SK-N-SH (cell line): ENCODE measurements at regions of chr1 and their contacts with region 1.

Region 1: GRCh38 chr1:149962123-149962548 is 25.5 kb upstream of the MTMR11 start:
- DNase-seq: peak; percentile 62
- H3K4me3 ChIP-seq: no peak overlapping the region
- H3K27ac ChIP-seq: peak overlapping the region; percentile 17 to 21; a peak in 3 of 4 replicates
- H3K4me1 ChIP-seq: 0 out of 4 replicates have a peak, but pooled peaks cover 0 to 3% of the 10 kb centered on the region in 2 experiments
- H3K27me3 ChIP-seq: no peaks in the 10 kb centered on the region
- CTCF ChIP-seq: peak; percentile 81
- EP300 ChIP-seq: no peak
- RAD21 ChIP-seq: peak; percentile 84

Region 2: DNA sequence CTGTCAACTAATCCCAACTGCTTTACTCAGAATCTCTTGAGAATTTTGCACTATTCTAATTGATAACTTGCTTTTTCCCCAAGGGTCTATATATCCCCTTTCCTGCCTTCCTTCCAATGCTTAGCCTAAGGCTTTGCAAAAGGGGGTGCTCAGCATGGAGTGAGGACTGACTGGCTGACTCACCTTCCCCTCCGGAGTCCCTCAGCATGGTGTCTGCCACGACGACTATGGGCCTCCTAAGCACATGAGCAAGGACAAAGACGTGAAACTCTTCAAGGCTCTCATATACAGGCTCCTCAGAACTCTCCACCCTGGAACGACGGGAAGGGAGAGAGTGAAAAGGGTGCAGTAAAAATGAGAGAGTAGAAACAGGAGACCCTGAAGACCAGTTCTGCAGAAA is 12.2 kb before region 1 on chr1:
- CTCF ChIA-PET with region 1: interaction called, 30 read pairs
- POLR2A ChIA-PET with region 1: no interaction called
- DNase-seq: no peak
- H3K4me3 ChIP-seq: no peak overlapping the region
- H3K27ac ChIP-seq: no peak overlapping the region
- H3K4me1 ChIP-seq: no peaks in the 10 kb centered on the region
- H3K27me3 ChIP-seq: no peaks in the 10 kb centered on the region
- CTCF ChIP-seq: no peak
- EP300 ChIP-seq: no peak
- RAD21 ChIP-seq: no peak

Region 3: GRCh38 chr1:150010393-150011115 is 48.4 kb after region 1 on chr1 and contains the start of gene OTUD7B:
- CTCF ChIA-PET with region 1: interaction called, 15 read pairs
- POLR2A ChIA-PET with region 1: no interaction called
- DNase-seq: peak; percentile 94
- H3K4me3 ChIP-seq: peak within 1 kb of the TSS; percentile 78 to 100
- H3K27ac ChIP-seq: peak within 1 kb of the TSS; percentile 93 to 98
- H3K4me1 ChIP-seq: peaks cover 19 to 25% of the 10 kb centered on the region in 2 experiments; a peak in 3 of 4 replicates
- H3K27me3 ChIP-seq: no peaks in the 10 kb centered on the region
- CTCF ChIP-seq: no peak; the same call in 1 of the 2 replicates
- EP300 ChIP-seq: peak; percentile 29 to 74; a peak in 2 of 4 replicates
- RAD21 ChIP-seq: 0 out of 2 replicates have a peak, but pooled peaks have one; percentile 8
- polyA plus RNA-seq, gene OTUD7B: 4.2 and 5.8 TPM in 2 replicates

Region 4: GRCh38 chr1:150061632-150062101 is 99.5 kb after region 1 on chr1:
- CTCF ChIA-PET with region 1: interaction called, 12 read pairs
- POLR2A ChIA-PET with region 1: no interaction called
- DNase-seq: no peak
- H3K4me3 ChIP-seq: no peak overlapping the region
- H3K27ac ChIP-seq: peak overlapping the region; percentile 60 to 84
- H3K4me1 ChIP-seq: peaks cover 15 to 16% of the 10 kb centered on the region in 2 experiments
- H3K27me3 ChIP-seq: no peaks in the 10 kb centered on the region
- CTCF ChIP-seq: no peak
- EP300 ChIP-seq: peak in 1 of 2 experiments; percentile 70; a peak in 1 of 4 replicates
- RAD21 ChIP-seq: no peak

Region 5: GRCh38 chr1:150162862-150163706 is 200.9 kb after region 1 on chr1:
- CTCF ChIA-PET with region 1: interaction called, 17 read pairs
- POLR2A ChIA-PET with region 1: no interaction called
- DNase-seq: peak; percentile 71
- H3K4me3 ChIP-seq: peak overlapping the region in 1 of 2 experiments; percentile 18; a peak in 1 of 4 replicates
- H3K27ac ChIP-seq: peak overlapping the region; percentile 94 to 95
- H3K4me1 ChIP-seq: peaks cover 31 to 43% of the 10 kb centered on the region in 2 experiments
- H3K27me3 ChIP-seq: no peaks in the 10 kb centered on the region
- CTCF ChIP-seq: no peak; the same call in 1 of the 2 replicates
- EP300 ChIP-seq: peak in 1 of 2 experiments; percentile 60; a peak in 1 of 4 replicates
- RAD21 ChIP-seq: no peak

Region 6: DNA sequence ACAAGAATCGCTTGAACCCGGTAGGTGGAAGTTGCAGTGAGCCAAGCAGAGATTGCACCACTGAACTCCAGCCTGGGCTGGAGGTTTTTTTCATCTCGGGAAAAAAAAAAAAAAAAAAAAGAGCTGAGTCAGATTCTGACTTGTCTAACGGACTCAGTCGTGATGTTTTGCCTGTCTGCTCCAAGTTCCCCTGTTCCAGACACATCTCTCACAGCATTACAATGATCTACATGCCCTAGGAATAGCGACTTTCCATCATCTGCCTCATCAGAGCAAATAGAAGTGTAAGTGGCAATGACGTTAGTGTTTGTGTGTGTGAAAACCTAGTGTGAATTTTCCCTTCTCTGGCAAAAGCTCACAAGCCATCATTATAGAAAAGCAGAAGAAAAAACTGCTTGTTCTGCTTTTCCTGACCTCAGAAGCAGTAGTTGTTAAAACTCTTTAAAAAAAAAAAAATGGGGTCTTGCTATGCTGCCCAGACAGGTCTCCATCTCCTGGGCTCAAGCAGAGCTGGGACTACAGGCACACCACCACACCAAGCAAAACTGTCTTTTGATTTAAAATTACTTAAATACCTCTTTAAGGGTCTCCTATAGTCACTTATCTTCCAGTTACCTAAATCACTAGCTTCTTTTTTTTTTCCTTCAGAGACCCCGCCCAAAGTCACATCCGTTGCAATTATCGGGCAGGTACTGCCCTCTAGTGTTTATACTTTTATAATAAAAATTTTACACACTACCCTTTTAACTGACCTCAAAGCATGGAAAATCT is 224.8 kb after region 1 on chr1:
- CTCF ChIA-PET with region 1: interaction called, 12 read pairs
- POLR2A ChIA-PET with region 1: no interaction called
- DNase-seq: peak; percentile 66
- H3K4me3 ChIP-seq: no peak overlapping the region
- H3K27ac ChIP-seq: peak overlapping the region in 1 of 2 experiments; percentile 42; a peak in 2 of 4 replicates
- H3K4me1 ChIP-seq: peaks cover 0 to 2% of the 10 kb centered on the region in 2 experiments; a peak in 1 of 4 replicates
- H3K27me3 ChIP-seq: no peaks in the 10 kb centered on the region
- CTCF ChIP-seq: peak; percentile 76
- EP300 ChIP-seq: no peak
- RAD21 ChIP-seq: peak; percentile 76